ENCODE measurements at regions of chr2 and their contacts with region 1.

Region 1: GRCh38 chr2:152717228-152718075 is at the start of gene PRPF40A:
- DNase-seq: peak; percentile 97
- CTCF ChIP-seq: no peak

Region 2: GRCh38 chr2:152537081-152537651 is 180.3 kb before region 1 on chr2:
- CTCF ChIA-PET with region 1: no interaction called
- POLR2A ChIA-PET with region 1: no interaction called
- DNase-seq: no peak
- CTCF ChIP-seq: no peak

Region 3: GRCh38 chr2:152701198-152701597 is 16.3 kb before region 1 on chr2:
- CTCF ChIA-PET with region 1: interaction called, 12 read pairs
- POLR2A ChIA-PET with region 1: interaction called, 3 read pairs
- DNase-seq: no peak
- CTCF ChIP-seq: no peak

Region 4: GRCh38 chr2:152730591-152731303 is 13.3 kb after region 1 on chr2:
- CTCF ChIA-PET with region 1: interaction called, 12 read pairs
- POLR2A ChIA-PET with region 1: interaction called, 3 read pairs
- DNase-seq: no peak
- CTCF ChIP-seq: no peak

Measured in GM10248 (cell line).